CD4-positive, alpha-beta T cell (primary cell): ENCODE measurements at regions of chr2 and their contacts with region 1.

Region 1: GRCh38 chr2:131673392-131674173 is 145.9 kb downstream of the CCDC74A start:
- DNase-seq: peak in 12 of 14 experiments; percentile 40 to 74 (median 52)
- ATAC-seq: no peak
- H3K4me3 ChIP-seq: peak overlapping the region; percentile 44
- H3K4me3 Mint-ChIP-seq: peak overlapping the region; percentile 69
- H3K27ac ChIP-seq: no peak overlapping the region
- H3K27ac Mint-ChIP-seq: no peak overlapping the region
- H3K4me1 ChIP-seq: peaks cover 21% of the 10 kb centered on the region
- H3K4me1 Mint-ChIP-seq: peaks cover 13% of the 10 kb centered on the region
- H3K27me3 ChIP-seq: peaks cover 24 to 34% of the 10 kb centered on the region in 2 experiments
- H3K27me3 Mint-ChIP-seq: peaks cover 62% of the 10 kb centered on the region
- CTCF ChIP-seq: peak; percentile 80

Region 2: GRCh38 chr2:131801210-131801744 is 127.7 kb after region 1 on chr2:
- CTCF ChIA-PET with region 1: interaction called, 5 read pairs
- POLR2A ChIA-PET with region 1: no interaction called
- intact Hi-C with region 1: loop called in 1 of 2 experiments (anchors 10 kb)
- DNase-seq: peak in 1 of 14 experiments; percentile 34
- ATAC-seq: no peak
- H3K4me3 ChIP-seq: no peak overlapping the region
- H3K4me3 Mint-ChIP-seq: no peak overlapping the region
- H3K27ac ChIP-seq: no peak overlapping the region
- H3K27ac Mint-ChIP-seq: no peak overlapping the region
- H3K4me1 ChIP-seq: peaks cover 7% of the 10 kb centered on the region
- H3K4me1 Mint-ChIP-seq: no peaks in the 10 kb centered on the region
- H3K27me3 ChIP-seq: no peaks in the 10 kb centered on the region
- H3K27me3 Mint-ChIP-seq: peaks cover 10% of the 10 kb centered on the region
- CTCF ChIP-seq: no peak